SK-N-SH (cell line): ENCODE measurements at regions of chr17 and their contacts with region 1.

Region 1: GRCh38 chr17:64202675-64203344 is 60.2 kb downstream of the TEX2 start:
- DNase-seq: peak; percentile 47
- H3K4me3 ChIP-seq: 0 out of 4 replicates have a peak overlapping the region, but pooled peaks of 1 of the 2 experiments have one; percentile 15
- H3K27ac ChIP-seq: peak overlapping the region; percentile 74 to 83
- H3K4me1 ChIP-seq: peaks cover 40 to 50% of the 10 kb centered on the region in 2 experiments
- H3K27me3 ChIP-seq: no peaks in the 10 kb centered on the region
- CTCF ChIP-seq: peak; percentile 28
- EP300 ChIP-seq: peak in 1 of 2 experiments; percentile 88; a peak in 2 of 4 replicates
- RAD21 ChIP-seq: peak; percentile 33; the same call in 1 of the 2 replicates

Region 2: GRCh38 chr17:64051153-64051552 is 151.7 kb before region 1 on chr17:
- CTCF ChIA-PET with region 1: no interaction called
- POLR2A ChIA-PET with region 1: no interaction called
- DNase-seq: no peak
- H3K4me3 ChIP-seq: no peak overlapping the region
- H3K27ac ChIP-seq: no peak overlapping the region
- H3K4me1 ChIP-seq: no peaks in the 10 kb centered on the region
- H3K27me3 ChIP-seq: no peaks in the 10 kb centered on the region
- CTCF ChIP-seq: no peak
- EP300 ChIP-seq: no peak
- RAD21 ChIP-seq: no peak

Region 3: GRCh38 chr17:64240741-64241347 is 38.0 kb after region 1 on chr17:
- CTCF ChIA-PET with region 1: interaction called, 10 read pairs
- POLR2A ChIA-PET with region 1: no interaction called
- DNase-seq: peak; percentile 87
- H3K4me3 ChIP-seq: peak overlapping the region; percentile 1 to 45; a peak in 3 of 4 replicates
- H3K27ac ChIP-seq: peak overlapping the region; percentile 79 to 97
- H3K4me1 ChIP-seq: peaks cover 36 to 44% of the 10 kb centered on the region in 2 experiments
- H3K27me3 ChIP-seq: no peaks in the 10 kb centered on the region
- CTCF ChIP-seq: no peak
- EP300 ChIP-seq: peak; percentile 51 to 91; a peak in 3 of 4 replicates
- RAD21 ChIP-seq: peak; percentile 46